ENCODE measurements at regions of chr1 and their contacts with region 1.

Region 1: DNA sequence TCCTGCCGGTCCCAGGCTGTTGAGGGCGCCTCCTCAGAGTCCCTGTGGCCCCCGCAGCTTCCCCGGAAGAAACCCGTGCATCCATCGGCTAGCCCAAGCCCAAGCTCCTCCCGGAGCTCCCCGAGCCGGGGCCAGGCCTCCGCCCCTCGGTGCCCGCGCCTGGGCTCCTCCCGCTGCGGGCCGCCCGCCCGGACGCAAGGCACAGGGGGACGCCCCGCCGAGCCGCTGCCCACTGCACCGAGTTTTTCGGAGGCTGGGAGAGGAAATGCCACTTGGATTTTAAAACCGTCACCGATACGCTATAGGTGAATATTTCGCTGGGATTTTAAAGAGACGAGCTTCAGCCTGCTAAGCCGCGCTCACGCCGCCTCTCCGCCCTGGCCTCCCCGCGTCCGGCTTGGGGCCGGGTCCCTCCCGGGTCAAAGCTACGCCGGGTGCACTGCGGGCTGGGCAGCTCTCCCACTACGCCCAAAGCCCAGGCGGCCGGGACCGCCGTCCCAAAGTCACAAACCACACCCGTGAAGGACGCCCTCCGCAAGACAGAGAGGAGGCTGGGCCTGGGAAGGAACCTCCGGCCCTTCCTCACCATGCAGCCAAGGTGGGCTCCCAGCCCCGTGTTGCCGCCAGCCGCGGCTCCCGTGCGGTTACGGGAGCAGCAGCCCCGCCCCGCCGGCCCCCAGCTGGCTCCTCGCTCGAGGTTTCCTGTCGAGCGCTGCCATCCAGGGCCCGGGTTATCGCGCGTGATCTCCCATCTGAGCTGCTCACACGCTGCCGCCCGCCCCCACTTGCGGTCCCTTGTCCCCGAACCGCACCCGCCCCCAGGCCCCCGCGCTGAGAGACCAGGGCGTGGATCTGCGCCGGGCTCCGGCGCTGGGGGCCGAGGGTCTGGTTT is 63.2 kb downstream of the CD247 start:
- DNase-seq: peak; percentile 87
- ATAC-seq: peak; percentile 70
- H3K4me3 Mint-ChIP-seq: peak overlapping the region; percentile 78
- H3K27ac Mint-ChIP-seq: peak overlapping the region; percentile 56
- H3K4me1 Mint-ChIP-seq: peaks cover 62% of the 10 kb centered on the region
- H3K27me3 Mint-ChIP-seq: no peaks in the 10 kb centered on the region

Region 2: DNA sequence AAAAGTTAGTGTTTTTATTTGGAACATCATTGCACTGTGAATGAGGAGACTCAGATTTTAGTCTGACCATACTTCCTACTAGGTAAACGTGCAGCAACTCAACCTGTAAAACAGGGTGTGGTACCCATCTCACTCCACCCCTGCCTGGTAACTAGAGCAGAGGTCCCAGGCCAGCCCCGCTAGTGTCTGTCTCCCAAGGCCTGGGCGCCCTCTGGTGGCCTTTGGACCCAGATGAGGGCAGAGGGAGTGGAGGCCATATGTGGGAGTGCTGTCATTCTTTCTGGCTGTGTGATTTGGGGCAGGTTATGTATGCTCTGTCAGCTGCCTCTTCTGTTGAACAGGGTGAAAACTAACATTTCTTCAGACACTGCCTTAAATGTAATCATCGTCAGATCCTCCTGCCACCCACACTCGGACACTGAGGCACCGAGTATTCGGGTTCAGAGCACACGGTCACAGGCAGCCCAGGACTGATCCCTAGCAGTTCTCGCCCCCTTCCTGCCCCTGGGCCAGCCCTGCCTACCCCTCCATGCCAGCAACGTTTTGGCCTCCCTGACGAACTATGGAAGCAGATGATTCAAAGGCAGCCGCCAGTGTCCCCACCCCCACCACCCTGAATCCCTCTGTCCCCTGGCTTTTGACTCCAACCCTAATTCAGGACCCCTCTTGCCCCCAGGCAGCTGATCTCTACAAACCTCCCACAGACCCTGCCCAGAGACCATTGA is 12.9 kb before region 1 on chr1:
- CTCF ChIA-PET with region 1: interaction called, 19 read pairs
- DNase-seq: peak; percentile 85
- ATAC-seq: peak; percentile 83
- H3K4me3 Mint-ChIP-seq: no peak overlapping the region
- H3K27ac Mint-ChIP-seq: peak overlapping the region; percentile 31
- H3K4me1 Mint-ChIP-seq: peaks cover 81% of the 10 kb centered on the region
- H3K27me3 Mint-ChIP-seq: no peaks in the 10 kb centered on the region

Region 3: DNA sequence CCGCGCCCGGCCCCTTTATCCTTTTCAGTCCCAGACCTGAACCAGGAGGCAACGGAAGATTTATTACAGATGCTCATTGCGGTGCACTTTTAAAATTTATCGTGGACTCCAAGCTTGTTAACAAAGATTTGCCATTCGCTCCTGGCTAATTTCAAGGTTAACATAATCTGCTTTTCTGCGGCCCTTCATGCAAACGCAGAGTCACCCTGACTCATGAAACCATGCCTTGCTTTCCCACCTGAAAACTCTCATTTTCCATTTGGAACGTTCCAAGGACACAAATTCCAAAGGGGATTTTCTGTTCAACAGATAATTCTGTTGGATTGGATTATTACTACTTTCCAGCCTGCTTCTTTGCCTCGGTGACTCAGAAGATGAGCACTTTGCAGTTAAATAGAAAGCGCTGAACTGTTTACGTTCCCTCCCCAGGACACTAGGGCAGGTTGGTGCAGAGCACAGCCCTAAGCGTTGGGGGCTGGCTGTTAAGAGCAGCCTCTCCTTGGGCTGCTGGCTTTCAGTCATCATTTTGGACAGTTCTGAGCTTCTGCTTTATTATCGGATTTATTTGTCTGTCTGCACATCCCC is 12.1 kb after region 1 on chr1:
- CTCF ChIA-PET with region 1: interaction called, 17 read pairs
- DNase-seq: no peak
- ATAC-seq: no peak
- H3K4me3 Mint-ChIP-seq: no peak overlapping the region
- H3K27ac Mint-ChIP-seq: no peak overlapping the region
- H3K4me1 Mint-ChIP-seq: peaks cover 37% of the 10 kb centered on the region
- H3K27me3 Mint-ChIP-seq: no peaks in the 10 kb centered on the region

Region 4: GRCh38 chr1:167899253-167899681 is 444.1 kb after region 1 on chr1:
- CTCF ChIA-PET with region 1: no interaction called
- DNase-seq: no peak
- ATAC-seq: no peak
- H3K4me3 Mint-ChIP-seq: no peak overlapping the region
- H3K27ac Mint-ChIP-seq: no peak overlapping the region
- H3K4me1 Mint-ChIP-seq: no peaks in the 10 kb centered on the region
- H3K27me3 Mint-ChIP-seq: no peaks in the 10 kb centered on the region

Measured in activated CD8-positive, alpha-beta memory T cell treated with anti-CD3 and anti-CD28 coated beads, Interleukin-2, amount 10 ng/mL, durations not matched to agents 7 days and 5 days (primary cell).